GM13977 (cell line): ENCODE measurements at regions of chr13 and their contacts with region 1.

Region 1: GRCh38 chr13:22964245-22964966 is 216.4 kb upstream of the SGCG start:
- DNase-seq: no peak
- CTCF ChIP-seq: no peak

Region 2: DNA sequence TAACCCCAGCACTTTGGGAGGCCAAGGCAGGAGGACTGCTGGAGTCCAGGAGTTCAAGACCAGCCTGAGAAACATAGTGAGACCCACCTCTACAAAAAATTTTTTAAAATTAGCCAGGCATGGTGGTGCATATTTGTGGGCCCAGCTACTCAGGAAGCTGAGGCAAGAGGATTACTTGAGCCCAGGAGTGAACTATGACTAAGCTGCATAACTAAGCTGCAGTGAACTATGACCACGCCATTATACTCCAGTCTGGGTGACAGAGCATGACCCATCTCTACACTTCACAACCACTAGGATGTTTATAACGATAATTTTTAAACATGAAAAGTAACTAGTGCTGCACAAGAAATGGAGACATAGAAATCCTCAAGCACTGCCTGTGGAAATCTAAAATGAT is 136.3 kb before region 1 on chr13:
- in situ Hi-C with region 1: no loop called
- DNase-seq: no peak
- CTCF ChIP-seq: no peak

Region 3: GRCh38 chr13:24386816-24387719 is 1422.7 kb after region 1 on chr13:
- in situ Hi-C with region 1: loop called (anchors 5 kb)
- DNase-seq: no peak
- CTCF ChIP-seq: no peak